B cell (primary cell): ENCODE measurements at regions of chr3 and their contacts with region 1.

Region 1: GRCh38 chr3:72977060-72977808 is 19.4 kb upstream of the PPP4R2 start:
- DNase-seq: no peak
- ATAC-seq: no peak
- H3K4me3 ChIP-seq: no peak overlapping the region
- H3K4me3 Mint-ChIP-seq: no peak overlapping the region
- H3K27ac ChIP-seq: no peak overlapping the region
- H3K27ac Mint-ChIP-seq: no peak overlapping the region
- H3K4me1 ChIP-seq: no peaks in the 10 kb centered on the region
- H3K4me1 Mint-ChIP-seq: no peaks in the 10 kb centered on the region
- H3K27me3 ChIP-seq: peaks cover 0 to 6% (median 3%) of the 10 kb centered on the region in 4 experiments
- H3K27me3 Mint-ChIP-seq: peaks cover 22% of the 10 kb centered on the region
- CTCF ChIP-seq: peak; percentile 36

Region 2: DNA sequence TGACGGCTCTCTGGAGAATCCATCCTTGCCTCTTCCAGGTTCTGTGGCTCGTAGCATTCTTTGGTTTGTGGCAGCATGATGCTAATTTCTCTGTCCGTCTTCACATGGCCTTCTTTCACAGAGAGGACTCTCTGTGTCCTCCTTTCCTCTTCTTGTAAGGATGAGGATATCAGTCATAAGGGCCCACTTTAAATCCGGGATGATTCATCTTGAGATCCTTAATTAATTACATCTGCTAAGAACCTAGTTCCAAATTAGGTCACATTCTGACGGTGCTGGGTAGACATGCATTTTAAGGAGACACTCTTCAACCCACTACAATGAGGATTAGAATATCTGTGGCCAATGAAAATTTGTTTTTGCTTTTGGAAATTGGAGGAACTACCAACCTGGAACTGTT is 105.1 kb before region 1 on chr3:
- CTCF ChIA-PET with region 1: no interaction called
- POLR2A ChIA-PET with region 1: interaction called, 12 read pairs
- intact Hi-C with region 1: no loop called
- DNase-seq: no peak
- ATAC-seq: no peak
- H3K4me3 ChIP-seq: no peak overlapping the region
- H3K4me3 Mint-ChIP-seq: no peak overlapping the region
- H3K27ac ChIP-seq: no peak overlapping the region
- H3K27ac Mint-ChIP-seq: no peak overlapping the region
- H3K4me1 ChIP-seq: no peaks in the 10 kb centered on the region
- H3K4me1 Mint-ChIP-seq: no peaks in the 10 kb centered on the region
- H3K27me3 ChIP-seq: peaks cover 0 to 14% (median 2%) of the 10 kb centered on the region in 4 experiments
- H3K27me3 Mint-ChIP-seq: peaks cover 16% of the 10 kb centered on the region
- CTCF ChIP-seq: no peak

Region 3: DNA sequence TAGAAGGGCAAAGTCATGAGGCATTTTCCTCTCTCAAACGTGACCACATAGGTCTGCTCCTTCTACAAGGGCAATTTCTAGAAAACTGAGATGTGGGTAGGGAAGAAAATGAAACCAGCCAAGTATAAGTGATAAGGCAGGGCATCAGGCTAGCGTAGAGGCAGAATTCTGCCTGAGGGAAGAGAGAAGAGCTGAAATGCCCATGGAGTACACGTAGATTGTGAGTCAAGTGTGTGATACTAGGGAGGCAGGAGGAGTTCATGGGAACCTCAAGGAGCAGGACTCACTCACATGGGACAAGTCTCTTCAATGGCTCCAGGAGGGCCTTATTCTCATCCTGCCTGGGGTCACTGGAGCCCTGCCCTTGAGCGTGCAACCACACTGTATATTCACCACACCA is 15.5 kb before region 1 on chr3:
- CTCF ChIA-PET with region 1: no interaction called
- POLR2A ChIA-PET with region 1: no interaction called
- intact Hi-C with region 1: no loop called
- DNase-seq: no peak
- ATAC-seq: no peak
- H3K4me3 ChIP-seq: no peak overlapping the region
- H3K4me3 Mint-ChIP-seq: no peak overlapping the region
- H3K27ac ChIP-seq: no peak overlapping the region
- H3K27ac Mint-ChIP-seq: no peak overlapping the region
- H3K4me1 ChIP-seq: peaks cover 11 to 17% of the 10 kb centered on the region in 2 donors
- H3K4me1 Mint-ChIP-seq: peaks cover 16% of the 10 kb centered on the region
- H3K27me3 ChIP-seq: no peaks in the 10 kb centered on the region
- H3K27me3 Mint-ChIP-seq: peaks cover 3% of the 10 kb centered on the region
- CTCF ChIP-seq: no peak